ENCODE measurements at regions of chr5 and their contacts with region 1.

Region 1: DNA sequence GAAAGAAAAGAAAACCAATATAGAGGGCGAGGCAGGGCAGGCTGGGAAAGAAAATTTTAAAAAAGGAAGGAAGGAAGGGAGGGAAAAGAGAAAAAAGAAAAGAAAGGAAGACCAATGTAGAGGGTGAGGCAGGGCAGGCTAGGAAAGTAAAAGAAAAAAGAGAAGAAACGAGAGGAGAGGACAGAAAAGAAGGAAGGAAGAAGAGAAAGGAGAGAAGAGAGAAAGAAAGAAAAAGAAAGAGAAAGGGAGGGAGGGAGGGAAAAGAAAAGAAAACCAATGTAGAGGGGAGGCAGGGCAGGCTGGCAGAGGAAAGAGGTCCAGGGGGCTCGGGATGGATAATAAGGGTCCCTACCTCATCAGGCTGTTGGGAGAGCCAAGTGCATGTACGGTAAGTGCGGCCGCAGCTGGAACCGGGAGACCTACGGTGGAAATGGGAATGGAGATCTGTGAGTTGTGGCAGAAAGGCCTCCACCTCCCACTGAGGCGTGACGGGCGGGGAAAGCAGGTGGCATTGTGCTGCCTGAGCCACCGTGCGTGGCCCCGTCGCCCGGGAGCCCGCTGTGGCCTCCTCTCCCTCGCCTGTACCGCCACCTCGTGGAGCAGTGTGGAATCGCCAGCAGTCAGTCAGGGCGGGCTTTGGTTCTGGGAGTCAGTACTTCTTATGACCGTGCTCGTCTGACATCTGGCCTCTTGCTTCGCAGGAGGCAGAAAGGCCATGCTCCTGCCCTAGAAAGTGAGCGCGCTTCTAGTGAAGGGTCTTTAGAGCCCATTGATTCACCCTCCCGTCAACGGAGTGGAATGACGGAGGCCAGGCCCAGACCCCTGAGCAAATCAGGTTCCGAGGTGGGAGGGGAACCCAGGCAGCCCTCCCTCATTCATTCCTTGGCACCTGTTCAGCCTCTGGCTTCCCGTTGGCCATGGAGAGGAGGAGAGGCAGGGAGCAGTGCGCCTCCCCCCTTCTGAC is 10.4 kb upstream of the NHP2 start:
- DNase-seq: peak; percentile 94
- ATAC-seq: peak; percentile 100
- H3K4me3 ChIP-seq: peak overlapping the region in 1 of 5 experiments; percentile 14
- H3K4me3 Mint-ChIP-seq: peak overlapping the region; percentile 17
- H3K27ac ChIP-seq: no peak overlapping the region
- H3K27ac Mint-ChIP-seq: peak overlapping the region; percentile 4
- H3K4me1 ChIP-seq: peaks cover 5 to 9% of the 10 kb centered on the region in 2 donors
- H3K4me1 Mint-ChIP-seq: peaks cover 16% of the 10 kb centered on the region
- H3K27me3 ChIP-seq: no peaks in the 10 kb centered on the region
- H3K27me3 Mint-ChIP-seq: peaks cover 11% of the 10 kb centered on the region
- CTCF ChIP-seq: peak; percentile 94

Region 2: GRCh38 chr5:177607452-177608192 is 556.4 kb before region 1 on chr5:
- CTCF ChIA-PET with region 1: no interaction called
- POLR2A ChIA-PET with region 1: no interaction called
- intact Hi-C with region 1: loop called (anchors 1 kb)
- DNase-seq: peak; percentile 71
- ATAC-seq: peak; percentile 86
- H3K4me3 ChIP-seq: no peak overlapping the region
- H3K4me3 Mint-ChIP-seq: no peak overlapping the region
- H3K27ac ChIP-seq: no peak overlapping the region
- H3K27ac Mint-ChIP-seq: peak overlapping the region; percentile 15
- H3K4me1 ChIP-seq: peaks cover 5 to 10% of the 10 kb centered on the region in 2 donors
- H3K4me1 Mint-ChIP-seq: peaks cover 16% of the 10 kb centered on the region
- H3K27me3 ChIP-seq: no peaks in the 10 kb centered on the region
- H3K27me3 Mint-ChIP-seq: no peaks in the 10 kb centered on the region
- CTCF ChIP-seq: peak; percentile 76

Region 3: GRCh38 chr5:178120868-178121357 is 43.1 kb before region 1 on chr5:
- CTCF ChIA-PET with region 1: interaction called, 10 read pairs
- POLR2A ChIA-PET with region 1: no interaction called
- intact Hi-C with region 1: no loop called
- DNase-seq: peak; percentile 88
- ATAC-seq: peak; percentile 50
- H3K4me3 ChIP-seq: peak overlapping the region in 4 of 5 experiments; percentile 18 to 34 (median 32)
- H3K4me3 Mint-ChIP-seq: peak overlapping the region; percentile 82
- H3K27ac ChIP-seq: peak overlapping the region in 1 of 2 donors; percentile 26
- H3K27ac Mint-ChIP-seq: peak overlapping the region; percentile 88
- H3K4me1 ChIP-seq: peaks cover 65 to 68% of the 10 kb centered on the region in 2 donors
- H3K4me1 Mint-ChIP-seq: peaks cover 68% of the 10 kb centered on the region
- H3K27me3 ChIP-seq: no peaks in the 10 kb centered on the region
- H3K27me3 Mint-ChIP-seq: no peaks in the 10 kb centered on the region
- CTCF ChIP-seq: peak; percentile 80

Region 4: GRCh38 chr5:178186427-178186826 is 22.4 kb after region 1 on chr5:
- CTCF ChIA-PET with region 1: no interaction called
- POLR2A ChIA-PET with region 1: no interaction called
- intact Hi-C with region 1: no loop called
- DNase-seq: no peak
- ATAC-seq: no peak
- H3K4me3 ChIP-seq: no peak overlapping the region
- H3K4me3 Mint-ChIP-seq: no peak overlapping the region
- H3K27ac ChIP-seq: no peak overlapping the region
- H3K27ac Mint-ChIP-seq: no peak overlapping the region
- H3K4me1 ChIP-seq: no peaks in the 10 kb centered on the region
- H3K4me1 Mint-ChIP-seq: peaks cover 7% of the 10 kb centered on the region
- H3K27me3 ChIP-seq: no peaks in the 10 kb centered on the region
- H3K27me3 Mint-ChIP-seq: peaks cover 17% of the 10 kb centered on the region
- CTCF ChIP-seq: no peak

Region 5: GRCh38 chr5:178196986-178197385 is 32.9 kb after region 1 on chr5:
- CTCF ChIA-PET with region 1: no interaction called
- POLR2A ChIA-PET with region 1: no interaction called
- intact Hi-C with region 1: no loop called
- DNase-seq: no peak
- ATAC-seq: no peak
- H3K4me3 ChIP-seq: no peak overlapping the region
- H3K4me3 Mint-ChIP-seq: no peak overlapping the region
- H3K27ac ChIP-seq: no peak overlapping the region
- H3K27ac Mint-ChIP-seq: no peak overlapping the region
- H3K4me1 ChIP-seq: no peaks in the 10 kb centered on the region
- H3K4me1 Mint-ChIP-seq: no peaks in the 10 kb centered on the region
- H3K27me3 ChIP-seq: peaks cover 0 to 18% (median 5%) of the 10 kb centered on the region in 4 experiments
- H3K27me3 Mint-ChIP-seq: peaks cover 18% of the 10 kb centered on the region
- CTCF ChIP-seq: no peak

Region 6: DNA sequence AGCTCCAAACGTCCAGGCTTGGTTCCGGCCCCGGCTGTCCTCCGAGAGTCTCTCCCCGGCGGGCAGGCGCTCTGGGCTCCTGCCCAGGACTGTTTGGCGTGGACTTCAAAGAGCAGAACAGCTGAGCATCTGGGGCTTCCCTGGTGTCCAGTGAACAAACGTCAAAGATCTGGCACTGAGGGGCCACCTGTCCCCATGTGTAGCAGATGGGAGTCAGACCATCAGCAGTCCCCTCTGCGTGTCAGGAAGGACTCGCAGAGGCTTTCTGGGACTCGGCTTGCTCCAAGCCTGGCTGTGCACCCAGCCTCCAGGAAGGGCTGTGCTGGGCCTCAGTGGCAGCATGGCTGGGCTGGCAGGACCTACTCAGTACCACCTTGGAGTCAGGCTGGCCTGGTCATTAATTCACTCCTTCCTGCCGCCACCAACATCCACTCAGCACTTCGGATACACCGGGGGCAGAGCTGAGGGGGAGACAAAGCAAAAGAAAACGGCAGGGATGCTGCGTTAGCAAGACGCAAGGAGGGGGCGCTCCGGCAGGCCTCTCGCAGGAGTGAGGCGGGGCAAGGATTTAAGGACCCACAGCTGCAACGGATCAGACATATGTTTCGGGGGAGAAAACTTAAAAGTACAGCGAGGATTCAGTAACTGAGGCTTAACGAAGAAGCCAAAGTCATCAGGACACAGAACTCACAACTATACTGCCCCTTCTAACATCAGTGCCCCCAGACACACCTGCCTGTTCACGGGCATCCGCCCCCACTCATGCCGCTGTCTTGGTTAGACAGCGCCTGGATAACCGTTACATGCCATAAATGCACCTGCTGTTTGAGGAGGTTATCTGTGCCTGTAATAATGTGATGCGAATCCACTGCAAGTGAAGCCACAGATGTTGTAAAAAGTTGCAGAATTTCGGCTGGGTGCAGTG is 233.0 kb after region 1 on chr5:
- CTCF ChIA-PET with region 1: no interaction called
- POLR2A ChIA-PET with region 1: no interaction called
- intact Hi-C with region 1: no loop called
- DNase-seq: no peak
- ATAC-seq: no peak
- H3K4me3 ChIP-seq: no peak overlapping the region
- H3K4me3 Mint-ChIP-seq: no peak overlapping the region
- H3K27ac ChIP-seq: no peak overlapping the region
- H3K27ac Mint-ChIP-seq: no peak overlapping the region
- H3K4me1 ChIP-seq: no peaks in the 10 kb centered on the region
- H3K4me1 Mint-ChIP-seq: no peaks in the 10 kb centered on the region
- H3K27me3 ChIP-seq: no peaks in the 10 kb centered on the region
- H3K27me3 Mint-ChIP-seq: peaks cover 4% of the 10 kb centered on the region
- CTCF ChIP-seq: no peak